HepG2 (cell line): ENCODE measurements at regions of chr1 and their contacts with region 1.

Region 1: GRCh38 chr1:26882696-26883463 is 7.2 kb downstream of the GPN2 start:
- DNase-seq: no peak
- ATAC-seq: peak; percentile 48
- H3K4me3 ChIP-seq: no peak overlapping the region
- H3K27ac ChIP-seq: peak overlapping the region; percentile 14
- H3K4me1 ChIP-seq: peaks cover 37% of the 10 kb centered on the region
- H3K27me3 ChIP-seq: no peaks in the 10 kb centered on the region
- CTCF ChIP-seq: no peak
- EP300 ChIP-seq: no peak
- POLR2A ChIP-seq: no peak
- RAD21 ChIP-seq: no peak

Region 2: GRCh38 chr1:26799479-26800142 is 83.3 kb before region 1 on chr1:
- CTCF ChIA-PET with region 1: no interaction called
- POLR2A ChIA-PET with region 1: no interaction called
- in situ Hi-C with region 1: no loop called
- intact Hi-C with region 1: no loop called
- DNase-seq: no peak
- ATAC-seq: no peak
- H3K4me3 ChIP-seq: no peak overlapping the region
- H3K27ac ChIP-seq: no peak overlapping the region
- H3K4me1 ChIP-seq: peaks cover 14% of the 10 kb centered on the region; the same call in 1 of the 2 replicates
- H3K27me3 ChIP-seq: no peaks in the 10 kb centered on the region
- CTCF ChIP-seq: no peak
- EP300 ChIP-seq: no peak
- POLR2A ChIP-seq: no peak
- RAD21 ChIP-seq: no peak

Region 3: GRCh38 chr1:26864610-26865527 is 18.0 kb before region 1 on chr1:
- CTCF ChIA-PET with region 1: interaction called, 4 read pairs
- POLR2A ChIA-PET with region 1: interaction called, 12 read pairs
- in situ Hi-C with region 1: no loop called
- intact Hi-C with region 1: no loop called
- DNase-seq: peak; percentile 93
- ATAC-seq: peak; percentile 94
- H3K4me3 ChIP-seq: peak overlapping the region; percentile 70 to 79 (median 70)
- H3K27ac ChIP-seq: peak overlapping the region; percentile 79
- H3K4me1 ChIP-seq: peaks cover 63% of the 10 kb centered on the region
- H3K27me3 ChIP-seq: no peaks in the 10 kb centered on the region
- CTCF ChIP-seq: no peak; the same call in 1 of the 2 replicates
- EP300 ChIP-seq: no peak
- POLR2A ChIP-seq: peak; percentile 97
- RAD21 ChIP-seq: peak; percentile 7; the same call in 1 of the 2 replicates

Region 4: GRCh38 chr1:27300341-27301051 is 417.6 kb after region 1 on chr1:
- CTCF ChIA-PET with region 1: no interaction called
- POLR2A ChIA-PET with region 1: no interaction called
- in situ Hi-C with region 1: no loop called
- intact Hi-C with region 1: no loop called
- DNase-seq: peak; percentile 61
- ATAC-seq: peak; percentile 86
- H3K4me3 ChIP-seq: no peak overlapping the region
- H3K27ac ChIP-seq: no peak overlapping the region
- H3K4me1 ChIP-seq: no peaks in the 10 kb centered on the region
- H3K27me3 ChIP-seq: no peaks in the 10 kb centered on the region
- CTCF ChIP-seq: peak; percentile 98
- EP300 ChIP-seq: no peak
- POLR2A ChIP-seq: no peak
- RAD21 ChIP-seq: peak; percentile 93